Activated CD8-positive, alpha-beta T cell treated with anti-CD3 and anti-CD28 coated beads for 36 hours (primary cell): ENCODE measurements at regions of chr11 and their contacts with region 1.

Region 1: DNA sequence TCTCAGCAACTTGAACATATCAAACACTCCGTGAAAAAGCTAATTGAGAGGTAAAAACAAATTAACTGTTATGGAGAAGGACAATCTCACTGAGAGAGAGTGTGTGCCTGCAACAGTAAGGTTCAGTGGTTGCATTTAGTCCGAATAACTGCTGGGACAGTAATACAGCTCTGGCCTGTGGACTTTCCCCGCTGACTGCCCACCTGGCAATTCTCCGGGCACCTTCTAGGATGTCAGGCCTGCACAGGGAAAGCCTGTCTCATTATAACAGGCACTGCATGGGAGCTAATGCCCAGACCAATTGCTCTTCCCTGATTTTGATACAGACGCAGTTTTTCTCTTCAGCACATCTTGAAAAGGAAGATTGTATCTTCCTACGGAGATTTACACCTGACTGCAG is 251.0 kb downstream of the DCDC1 start:
- DNase-seq: no peak
- ATAC-seq: no peak
- H3K4me3 Mint-ChIP-seq: no peak overlapping the region
- H3K27ac Mint-ChIP-seq: no peak overlapping the region
- H3K4me1 Mint-ChIP-seq: no peaks in the 10 kb centered on the region
- H3K27me3 Mint-ChIP-seq: no peaks in the 10 kb centered on the region
- CTCF ChIP-seq: no peak

Region 2: DNA sequence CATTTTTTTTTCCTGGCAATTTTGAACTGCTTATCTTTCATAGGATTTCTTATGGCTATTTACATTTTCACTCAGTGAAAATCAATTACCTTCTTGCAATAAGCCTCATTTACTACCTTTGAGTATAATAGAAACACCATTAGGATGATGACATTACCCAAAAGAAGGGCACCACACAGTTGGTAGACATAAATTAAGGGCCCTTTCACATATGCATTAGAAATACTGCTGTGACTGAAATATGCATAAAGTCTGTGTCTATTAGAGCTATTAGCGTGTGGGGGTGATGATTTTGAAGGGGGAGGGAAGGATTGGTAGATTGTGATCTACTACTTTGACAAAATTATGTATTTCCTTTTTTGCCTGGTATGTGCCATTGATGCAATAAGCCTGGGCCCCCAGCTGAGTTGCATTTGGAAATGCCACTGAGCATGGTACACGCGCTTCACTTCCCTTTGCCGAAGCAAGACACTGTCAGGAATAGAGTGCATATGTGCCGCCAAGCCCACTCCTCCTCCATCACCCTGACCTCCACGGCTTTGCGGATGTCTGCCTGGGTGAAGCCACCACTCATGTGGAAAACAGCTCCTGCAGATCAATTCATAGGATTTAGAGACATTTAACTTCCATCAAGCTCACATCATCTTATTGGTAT is 88.3 kb before region 1 on chr11:
- CTCF ChIA-PET with region 1: no interaction called
- POLR2A ChIA-PET with region 1: no interaction called
- intact Hi-C with region 1: no loop called
- DNase-seq: no peak
- ATAC-seq: no peak
- H3K4me3 Mint-ChIP-seq: no peak overlapping the region
- H3K27ac Mint-ChIP-seq: no peak overlapping the region
- H3K4me1 Mint-ChIP-seq: no peaks in the 10 kb centered on the region
- H3K27me3 Mint-ChIP-seq: no peaks in the 10 kb centered on the region
- CTCF ChIP-seq: no peak

Region 3: DNA sequence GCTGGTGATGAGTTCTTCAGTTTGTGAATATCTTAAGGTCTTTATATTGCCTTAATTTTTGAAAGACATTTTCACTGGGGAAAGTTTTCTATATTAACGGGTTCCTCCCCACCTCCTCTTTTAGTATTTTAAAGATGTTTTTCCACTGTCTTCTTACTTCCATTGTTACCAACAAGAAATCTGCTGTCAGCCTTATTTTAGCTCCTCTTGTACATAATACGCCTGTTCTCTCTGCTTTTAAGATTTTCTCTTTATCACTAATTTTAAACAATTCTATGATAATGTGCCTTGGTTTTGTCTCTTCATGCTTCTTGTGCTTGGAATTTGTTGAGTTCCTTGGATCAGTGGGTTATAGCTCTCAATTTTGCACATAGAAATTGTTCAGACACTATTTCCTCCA is 29.4 kb before region 1 on chr11:
- CTCF ChIA-PET with region 1: no interaction called
- POLR2A ChIA-PET with region 1: no interaction called
- intact Hi-C with region 1: no loop called
- DNase-seq: no peak
- ATAC-seq: no peak
- H3K4me3 Mint-ChIP-seq: no peak overlapping the region
- H3K27ac Mint-ChIP-seq: no peak overlapping the region
- H3K4me1 Mint-ChIP-seq: no peaks in the 10 kb centered on the region
- H3K27me3 Mint-ChIP-seq: no peaks in the 10 kb centered on the region
- CTCF ChIP-seq: no peak

Region 4: GRCh38 chr11:31107062-31107461 is 11.5 kb before region 1 on chr11:
- CTCF ChIA-PET with region 1: interaction called, 16 read pairs
- POLR2A ChIA-PET with region 1: no interaction called
- intact Hi-C with region 1: no loop called
- DNase-seq: peak; percentile 69
- ATAC-seq: peak; percentile 27
- H3K4me3 Mint-ChIP-seq: no peak overlapping the region
- H3K27ac Mint-ChIP-seq: no peak overlapping the region
- H3K4me1 Mint-ChIP-seq: no peaks in the 10 kb centered on the region
- H3K27me3 Mint-ChIP-seq: no peaks in the 10 kb centered on the region
- CTCF ChIP-seq: no peak

Region 5: DNA sequence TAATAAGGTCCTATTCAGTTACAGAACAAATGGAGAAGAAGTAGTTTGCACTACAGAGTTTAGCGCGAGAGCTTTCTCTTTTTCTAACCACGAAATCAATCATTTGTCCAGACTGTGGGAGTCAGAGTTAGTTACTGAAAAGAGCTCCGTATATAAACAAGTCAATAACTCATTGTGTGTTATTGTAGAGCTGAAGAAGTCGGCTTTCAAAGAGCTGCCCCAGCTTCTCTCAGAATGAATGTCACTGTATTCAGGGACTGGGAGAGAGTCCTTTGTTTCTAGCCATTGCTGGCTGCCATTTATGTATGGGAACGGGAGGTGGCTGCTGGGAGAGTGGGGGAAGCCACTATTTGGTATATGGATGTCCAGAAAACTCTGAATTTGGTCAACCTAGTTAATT is 23.2 kb after region 1 on chr11:
- CTCF ChIA-PET with region 1: no interaction called
- POLR2A ChIA-PET with region 1: no interaction called
- intact Hi-C with region 1: no loop called
- DNase-seq: no peak
- ATAC-seq: no peak
- H3K4me3 Mint-ChIP-seq: no peak overlapping the region
- H3K27ac Mint-ChIP-seq: no peak overlapping the region
- H3K4me1 Mint-ChIP-seq: no peaks in the 10 kb centered on the region
- H3K27me3 Mint-ChIP-seq: peaks cover 3% of the 10 kb centered on the region
- CTCF ChIP-seq: no peak

Region 6: GRCh38 chr11:31641477-31642062 is 523.0 kb after region 1 on chr11:
- CTCF ChIA-PET with region 1: no interaction called
- POLR2A ChIA-PET with region 1: no interaction called
- intact Hi-C with region 1: no loop called
- DNase-seq: peak; percentile 1
- ATAC-seq: no peak
- H3K4me3 Mint-ChIP-seq: no peak overlapping the region
- H3K27ac Mint-ChIP-seq: no peak overlapping the region
- H3K4me1 Mint-ChIP-seq: no peaks in the 10 kb centered on the region
- H3K27me3 Mint-ChIP-seq: no peaks in the 10 kb centered on the region
- CTCF ChIP-seq: peak; percentile 53